ENCODE measurements at regions of chr20 and their contacts with region 1.

Region 1: DNA sequence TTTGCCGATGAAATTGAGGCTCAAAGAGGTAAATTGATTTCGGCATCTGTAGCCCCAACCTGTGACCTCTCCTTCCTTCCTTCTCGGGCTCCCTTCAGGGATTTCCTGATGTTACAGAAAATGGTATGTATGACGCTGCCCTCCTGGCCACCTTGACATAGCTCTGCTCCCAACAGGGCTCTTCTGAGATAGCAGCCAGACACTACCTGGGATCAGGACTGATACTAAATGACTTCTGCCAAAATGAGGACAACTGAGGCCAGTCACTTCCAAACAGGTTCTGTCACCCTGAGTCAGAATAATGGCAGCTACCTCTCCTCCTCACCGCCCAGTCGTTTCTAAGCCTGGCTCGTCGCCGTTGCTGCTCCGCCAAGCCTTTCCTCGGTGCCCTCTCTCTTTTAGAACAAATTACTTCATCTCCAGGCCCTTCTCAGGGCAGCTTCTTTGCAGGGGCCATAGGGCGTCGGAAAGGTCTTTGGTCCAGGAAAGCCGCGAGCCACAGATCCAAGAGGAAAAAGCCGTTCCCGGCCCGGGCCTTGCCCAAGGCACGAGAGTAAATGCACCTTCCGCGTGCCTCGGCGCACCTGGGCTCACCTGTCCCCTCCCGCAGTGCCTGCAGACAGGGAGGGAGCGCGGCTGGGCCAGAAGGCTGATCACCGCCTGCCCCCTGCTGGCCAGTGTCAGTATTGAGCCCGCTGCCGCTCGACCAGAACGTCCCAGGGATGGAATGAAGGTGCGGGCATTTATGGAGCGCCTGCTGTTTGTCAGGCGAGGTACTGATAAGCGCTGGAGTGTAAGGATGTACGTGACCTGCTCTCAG is 904 bp upstream of the LPIN3 start:
- DNase-seq: peak; percentile 82 to 91 (median 85)
- ATAC-seq: peak; percentile 74 to 83 (median 79)
- H3K4me3 ChIP-seq: peak overlapping the region in 11 of 12 donors; percentile 28 to 70 (median 60)
- H3K27ac ChIP-seq: peak overlapping the region; percentile 66 to 89 (median 74)
- H3K4me1 ChIP-seq: peaks cover 0 to 51% (median 20%) of the 10 kb centered on the region in 12 donors
- H3K27me3 ChIP-seq: peaks cover 0 to 4% (median 0%) of the 10 kb centered on the region in 9 donors
- CTCF ChIP-seq: peak; percentile 97 to 100 (median 98)
- POLR2A ChIP-seq: no peak

Region 2: DNA sequence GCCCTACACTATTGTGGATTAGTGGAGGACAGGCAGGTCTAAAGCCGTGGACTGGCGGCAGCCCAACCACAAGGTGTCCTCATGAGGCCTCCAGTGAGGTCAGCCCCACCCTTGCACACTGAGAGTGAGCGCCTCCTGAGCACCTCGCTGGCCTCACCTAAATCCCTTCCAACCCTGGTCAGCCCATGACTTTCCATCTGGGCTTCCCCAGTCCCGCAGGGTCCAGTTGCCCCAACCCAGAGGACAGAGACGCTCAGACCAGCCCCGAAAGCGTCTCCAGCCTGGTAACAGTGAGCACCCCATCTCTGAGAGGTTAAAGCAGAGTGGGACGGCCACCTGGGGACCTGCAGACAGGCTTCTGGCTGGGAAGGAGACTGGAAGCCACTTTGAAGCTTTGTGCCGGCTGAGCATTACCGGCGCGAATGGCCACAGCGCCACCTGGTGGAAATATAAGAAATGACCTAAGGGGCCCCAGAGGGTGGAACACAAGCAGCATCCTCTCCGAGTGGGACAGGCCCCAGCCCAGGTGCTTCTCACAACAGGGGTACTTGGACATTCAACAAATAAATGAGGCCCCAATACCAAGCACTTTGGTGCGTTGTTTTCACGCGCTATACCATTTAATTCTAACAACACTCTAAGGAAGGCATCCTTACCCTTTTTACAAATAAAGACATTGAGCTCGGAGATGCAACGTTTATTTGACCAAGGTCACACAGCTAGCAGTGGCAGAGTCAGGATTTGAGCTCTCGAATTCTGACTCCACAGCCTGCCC is 376.8 kb before region 1 on chr20:
- intact Hi-C with region 1: loop called in 1 of 10 experiments (anchors 10 kb)
- DNase-seq: peak; percentile 59 to 78 (median 60)
- ATAC-seq: peak; percentile 65 to 87 (median 83)
- H3K4me3 ChIP-seq: no peak overlapping the region
- H3K27ac ChIP-seq: no peak overlapping the region
- H3K4me1 ChIP-seq: peaks cover 0 to 3% (median 0%) of the 10 kb centered on the region in 12 donors
- H3K27me3 ChIP-seq: no peaks in the 10 kb centered on the region
- CTCF ChIP-seq: peak; percentile 82 to 97 (median 91)
- POLR2A ChIP-seq: no peak

Region 3: DNA sequence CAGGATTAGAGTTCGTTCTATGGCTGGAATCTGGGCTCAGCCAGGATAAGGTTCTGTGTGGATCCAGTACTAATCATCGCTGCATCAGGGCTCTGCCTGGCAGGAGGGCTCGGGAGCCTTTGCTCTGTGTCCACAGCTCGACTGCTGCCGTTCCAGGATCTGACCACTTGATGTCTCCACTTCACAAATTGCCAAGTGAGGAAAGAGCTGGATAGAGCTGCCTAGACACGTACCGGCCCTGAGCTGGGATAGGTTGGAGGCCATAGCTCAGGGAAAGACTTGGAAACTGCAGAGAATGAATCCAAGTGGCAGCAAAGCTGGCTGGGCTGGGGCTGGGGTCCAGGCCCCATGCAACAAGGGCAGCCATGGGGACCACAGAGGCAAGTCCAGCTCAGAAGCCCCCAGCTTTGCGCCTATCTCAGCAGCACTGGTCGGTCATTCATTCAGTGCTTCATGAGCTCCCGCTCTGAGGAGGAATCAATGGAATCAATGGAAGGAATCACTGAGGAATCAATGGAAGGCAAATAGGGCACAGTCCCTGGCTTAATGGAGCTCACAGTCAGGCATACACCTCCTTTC is 349.1 kb before region 1 on chr20:
- intact Hi-C with region 1: loop called in 1 of 10 experiments (anchors 10 kb)
- DNase-seq: peak; percentile 75 to 83 (median 80)
- ATAC-seq: peak; percentile 96 to 99 (median 98)
- H3K4me3 ChIP-seq: no peak overlapping the region
- H3K27ac ChIP-seq: peak overlapping the region in 1 of 12 donors; percentile 68
- H3K4me1 ChIP-seq: peaks cover 0 to 21% (median 0%) of the 10 kb centered on the region in 12 donors
- H3K27me3 ChIP-seq: no peaks in the 10 kb centered on the region
- CTCF ChIP-seq: peak; percentile 63 to 89 (median 81)
- POLR2A ChIP-seq: no peak

Region 4: DNA sequence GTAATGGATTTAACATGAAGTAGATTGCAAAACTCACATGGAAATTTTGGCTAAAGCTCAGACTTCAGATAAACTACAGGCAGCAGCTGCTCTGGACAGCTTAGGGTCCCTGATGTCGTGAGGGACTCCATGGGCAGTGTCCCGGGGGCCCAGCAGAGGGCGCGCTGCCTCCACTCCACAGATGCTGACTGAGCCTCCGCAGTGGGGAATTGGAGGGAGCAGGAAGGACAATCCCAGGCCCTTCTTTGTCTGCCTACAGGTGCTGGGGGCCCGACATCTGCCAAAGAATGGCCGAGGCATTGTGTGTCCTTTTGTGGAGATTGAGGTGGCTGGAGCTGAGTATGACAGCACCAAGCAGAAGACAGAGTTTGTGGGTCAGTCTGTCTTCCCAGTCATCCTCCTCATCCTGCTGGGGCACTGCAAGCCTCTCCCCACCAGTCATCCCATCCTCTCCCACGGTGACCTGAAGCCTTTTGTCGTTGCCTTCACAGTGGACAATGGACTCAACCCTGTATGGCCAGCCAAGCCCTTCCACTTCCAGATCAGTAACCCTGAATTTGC is 166.5 kb before region 1 on chr20:
- intact Hi-C with region 1: loop called (anchors 1 to 2 kb)
- DNase-seq: peak; percentile 85 to 92 (median 87)
- ATAC-seq: peak; percentile 66 to 83 (median 80)
- H3K4me3 ChIP-seq: no peak overlapping the region
- H3K27ac ChIP-seq: peak overlapping the region; percentile 68 to 93 (median 84)
- H3K4me1 ChIP-seq: peaks cover 14 to 71% (median 54%) of the 10 kb centered on the region in 12 donors
- H3K27me3 ChIP-seq: no peaks in the 10 kb centered on the region
- CTCF ChIP-seq: peak; percentile 96 to 99 (median 98)
- POLR2A ChIP-seq: no peak

Region 5: GRCh38 chr20:41249406-41250281 is 90.1 kb before region 1 on chr20:
- intact Hi-C with region 1: loop called in 9 of 10 experiments (anchors 1 to 5 kb)
- DNase-seq: peak; percentile 45 to 82 (median 71)
- ATAC-seq: peak; percentile 80 to 90 (median 84)
- H3K4me3 ChIP-seq: no peak overlapping the region
- H3K27ac ChIP-seq: peak overlapping the region; percentile 79 to 95 (median 89)
- H3K4me1 ChIP-seq: peaks cover 32 to 65% (median 60%) of the 10 kb centered on the region in 12 donors
- H3K27me3 ChIP-seq: no peaks in the 10 kb centered on the region
- CTCF ChIP-seq: peak in 11 of 12 donors; percentile 10 to 49 (median 37)
- POLR2A ChIP-seq: no peak

Region 6: GRCh38 chr20:41693136-41693979 is 353.6 kb after region 1 on chr20:
- intact Hi-C with region 1: loop called in 3 of 10 experiments (anchors 5 to 10 kb)
- DNase-seq: peak; percentile 80 to 90 (median 84)
- ATAC-seq: peak; percentile 94 to 97 (median 96)
- H3K4me3 ChIP-seq: peak overlapping the region; percentile 56 to 87 (median 73)
- H3K27ac ChIP-seq: peak overlapping the region; percentile 82 to 95 (median 90)
- H3K4me1 ChIP-seq: peaks cover 0 to 25% (median 6%) of the 10 kb centered on the region in 12 donors
- H3K27me3 ChIP-seq: no peaks in the 10 kb centered on the region
- CTCF ChIP-seq: peak; percentile 38 to 85 (median 56)
- POLR2A ChIP-seq: peak in 1 of 2 donors; percentile 33